A673 (cell line): ENCODE measurements at regions of chr12 and their contacts with region 1.

Region 1: GRCh38 chr12:63045020-63045860 is 105.8 kb downstream of the AVPR1A start:
- DNase-seq: no peak
- H3K4me3 ChIP-seq: no peak overlapping the region
- H3K27ac ChIP-seq: no peak overlapping the region
- H3K4me1 ChIP-seq: no peaks in the 10 kb centered on the region
- H3K27me3 ChIP-seq: peaks cover 3% of the 10 kb centered on the region
- CTCF ChIP-seq: no peak

Region 2: DNA sequence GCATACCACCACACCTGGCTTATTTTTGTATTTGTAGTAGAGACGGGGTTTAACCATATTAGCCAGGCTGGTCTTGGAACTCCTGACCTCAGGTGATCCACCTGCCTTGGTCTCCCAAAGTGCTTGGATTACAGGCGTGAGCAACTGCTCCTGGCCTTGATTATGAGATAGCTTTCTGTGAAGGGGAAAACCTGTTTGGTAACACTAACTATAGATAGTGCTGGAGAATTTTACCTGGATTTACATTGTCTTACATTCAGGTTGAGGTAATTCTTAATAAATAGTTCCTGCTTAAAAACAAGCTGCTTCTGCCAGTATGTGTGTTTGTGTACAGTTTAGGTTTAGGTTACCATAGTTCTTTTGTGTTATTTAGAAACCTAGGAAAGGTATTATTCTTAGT is 501.5 kb before region 1 on chr12:
- CTCF ChIA-PET with region 1: interaction called, 13 read pairs
- POLR2A ChIA-PET with region 1: no interaction called
- intact Hi-C with region 1: no loop called
- DNase-seq: no peak
- H3K4me3 ChIP-seq: no peak overlapping the region
- H3K27ac ChIP-seq: no peak overlapping the region
- H3K4me1 ChIP-seq: no peaks in the 10 kb centered on the region
- H3K27me3 ChIP-seq: no peaks in the 10 kb centered on the region
- CTCF ChIP-seq: no peak